ENCODE measurements at regions of chr4 and their contacts with region 1.

Region 1: GRCh38 chr4:24472514-24473308 is 111.6 kb downstream of the DHX15 start:
- DNase-seq: peak; percentile 74
- ATAC-seq: peak; percentile 64
- H3K4me3 ChIP-seq: peak overlapping the region; percentile 47
- H3K27ac ChIP-seq: no peak overlapping the region; the same call in 1 of the 2 replicates
- H3K4me1 ChIP-seq: no peaks in the 10 kb centered on the region; the same call in 1 of the 2 replicates
- H3K27me3 ChIP-seq: peaks cover 16% of the 10 kb centered on the region
- CTCF ChIP-seq: peak; percentile 64
- POLR2A ChIP-seq: no peak
- RAD21 ChIP-seq: peak; percentile 34; the same call in 1 of the 2 replicates

Region 2: GRCh38 chr4:23889814-23890341 is 582.8 kb before region 1 on chr4 and contains the start of gene PPARGC1A:
- CTCF ChIA-PET with region 1: no interaction called
- POLR2A ChIA-PET with region 1: no interaction called
- dilution Hi-C with region 1: no loop called
- in situ Hi-C with region 1: no loop called
- intact Hi-C with region 1: no loop called
- DNase-seq: peak; percentile 50
- ATAC-seq: peak; percentile 33; the same call in 1 of the 2 replicates
- H3K4me3 ChIP-seq: peak within 1 kb of the TSS; percentile 35
- H3K27ac ChIP-seq: peak within 1 kb of the TSS; percentile 1
- H3K4me1 ChIP-seq: peaks cover 4% of the 10 kb centered on the region
- H3K27me3 ChIP-seq: no peaks in the 10 kb centered on the region
- CTCF ChIP-seq: no peak
- POLR2A ChIP-seq: no peak
- RAD21 ChIP-seq: no peak
- total RNA-seq, gene PPARGC1A: under 0.01 TPM in 2 replicates

Region 3: DNA sequence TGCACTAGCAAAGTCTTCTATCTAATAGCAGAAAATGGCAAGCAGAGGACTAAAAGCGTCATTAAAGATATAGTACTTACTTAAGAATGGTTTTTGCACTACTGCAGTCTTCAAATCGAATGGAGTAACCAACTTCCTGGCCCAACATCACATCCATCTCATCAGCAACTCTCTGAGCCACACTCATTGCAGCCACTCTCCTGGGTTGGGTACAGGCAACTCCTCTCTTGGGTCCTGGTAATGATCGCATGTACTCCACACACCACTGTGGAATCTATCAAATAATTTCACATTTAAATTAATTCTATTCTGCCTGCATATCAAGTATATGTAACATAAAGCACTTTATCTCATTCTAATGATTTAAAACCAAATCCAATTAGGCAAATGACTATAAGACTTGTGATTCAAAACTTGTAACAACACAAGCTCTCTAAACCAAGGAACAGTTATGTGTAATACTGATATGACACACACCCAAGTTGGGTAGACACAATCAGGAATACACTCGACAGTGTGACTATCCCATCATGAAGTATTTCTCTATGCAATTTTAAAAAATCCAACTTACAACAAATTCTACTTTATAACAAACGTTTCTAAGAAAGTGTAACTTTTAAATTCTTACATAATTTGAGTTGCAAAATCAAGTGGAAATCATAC is 98.0 kb after region 1 on chr4:
- CTCF ChIA-PET with region 1: no interaction called
- POLR2A ChIA-PET with region 1: no interaction called
- dilution Hi-C with region 1: no loop called
- in situ Hi-C with region 1: no loop called
- intact Hi-C with region 1: no loop called
- DNase-seq: no peak
- ATAC-seq: no peak
- H3K4me3 ChIP-seq: no peak overlapping the region
- H3K27ac ChIP-seq: no peak overlapping the region
- H3K4me1 ChIP-seq: peaks cover under 1% of the 10 kb centered on the region; the same call in 1 of the 2 replicates
- H3K27me3 ChIP-seq: no peaks in the 10 kb centered on the region
- CTCF ChIP-seq: no peak
- POLR2A ChIP-seq: no peak
- RAD21 ChIP-seq: no peak

Region 4: DNA sequence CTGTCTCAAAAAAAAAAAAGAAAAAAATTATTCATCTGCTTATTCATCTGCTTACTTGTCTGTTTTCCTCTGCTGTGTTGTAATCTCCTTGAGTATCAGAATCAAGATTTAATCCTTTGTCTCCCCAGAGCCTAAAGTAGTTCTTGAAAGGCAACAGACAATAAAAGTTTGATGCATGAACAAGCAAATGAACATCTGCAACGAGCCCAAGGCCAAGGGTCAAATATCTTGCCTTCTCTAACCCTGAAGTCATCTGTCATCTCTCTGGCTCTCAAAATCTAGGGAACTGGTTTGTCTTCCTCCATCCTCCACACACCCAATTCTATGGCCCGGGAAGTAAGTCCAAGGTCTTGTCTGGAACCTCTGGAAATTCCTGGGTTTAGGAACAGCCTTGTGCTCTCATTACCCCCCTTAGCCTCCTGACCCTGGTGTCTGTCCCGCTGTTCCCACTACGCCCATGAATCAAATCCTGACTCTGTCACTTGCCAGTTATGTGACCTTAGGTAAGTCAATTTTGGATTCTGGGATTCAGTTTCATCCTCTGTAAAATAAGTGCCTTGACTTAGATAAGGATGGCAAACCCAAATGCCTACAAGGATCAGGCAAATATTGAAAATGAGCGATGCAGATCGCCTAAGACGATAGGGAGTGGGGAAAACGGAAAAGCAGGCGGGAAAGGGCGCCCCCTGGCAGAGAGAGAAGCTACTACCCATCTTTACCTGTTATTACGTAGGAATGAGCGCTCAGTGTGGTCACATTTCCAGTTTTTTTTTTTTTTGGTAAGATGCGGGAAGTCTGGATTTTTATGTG is 214.4 kb after region 1 on chr4:
- CTCF ChIA-PET with region 1: no interaction called
- POLR2A ChIA-PET with region 1: no interaction called
- dilution Hi-C with region 1: no loop called
- in situ Hi-C with region 1: loop called (anchors 25 kb)
- intact Hi-C with region 1: loop called (anchors 10 kb)
- DNase-seq: no peak
- ATAC-seq: no peak
- H3K4me3 ChIP-seq: no peak overlapping the region
- H3K27ac ChIP-seq: no peak overlapping the region
- H3K4me1 ChIP-seq: peaks cover 3% of the 10 kb centered on the region; the same call in 1 of the 2 replicates
- H3K27me3 ChIP-seq: peaks cover 7% of the 10 kb centered on the region
- CTCF ChIP-seq: peak; percentile 35
- POLR2A ChIP-seq: no peak
- RAD21 ChIP-seq: peak; percentile 48

Region 5: GRCh38 chr4:24794916-24795665 is 322.4 kb after region 1 on chr4 and contains the start of gene SOD3:
- CTCF ChIA-PET with region 1: no interaction called
- POLR2A ChIA-PET with region 1: no interaction called
- dilution Hi-C with region 1: no loop called
- in situ Hi-C with region 1: no loop called
- intact Hi-C with region 1: loop called (anchors 10 kb)
- DNase-seq: peak; percentile 86
- ATAC-seq: peak; percentile 100
- H3K4me3 ChIP-seq: peak within 1 kb of the TSS; percentile 26; the same call in 1 of the 2 replicates
- H3K27ac ChIP-seq: peak within 1 kb of the TSS; percentile 35; the same call in 1 of the 2 replicates
- H3K4me1 ChIP-seq: peaks cover 9% of the 10 kb centered on the region
- H3K27me3 ChIP-seq: no peaks in the 10 kb centered on the region; the same call in 1 of the 2 replicates
- CTCF ChIP-seq: no peak
- POLR2A ChIP-seq: no peak
- RAD21 ChIP-seq: no peak
- total RNA-seq, gene SOD3: 0.28 and 0.36 TPM in 2 replicates